Heart left ventricle (tissue), 16 donors: ENCODE measurements at regions of chr15 and their contacts with region 1.

Region 1: DNA sequence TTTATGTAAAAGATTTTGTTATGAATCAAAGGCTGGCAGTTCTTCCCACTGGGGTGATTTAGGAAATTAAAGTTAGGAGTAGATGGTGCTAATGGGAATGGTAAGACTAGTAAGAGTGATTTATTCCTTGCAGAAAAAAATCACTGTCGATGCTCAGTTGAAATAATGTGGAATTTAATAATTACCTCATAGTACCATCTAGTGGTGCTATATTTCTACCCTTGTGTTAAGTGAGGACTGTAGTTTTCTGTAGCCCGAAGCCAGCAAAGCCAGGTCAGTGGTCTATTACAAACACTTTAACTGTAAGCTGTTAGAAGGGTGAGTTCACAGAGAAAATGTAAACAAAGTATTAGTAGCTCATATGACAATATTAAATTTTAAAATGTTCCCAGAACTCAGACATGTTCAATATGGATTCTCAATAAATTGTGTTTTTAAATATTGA is 39.5 kb upstream of the GOLGA8J start:
- DNase-seq: no peak
- ATAC-seq: no peak
- H3K4me3 ChIP-seq: no peak overlapping the region
- H3K27ac ChIP-seq: no peak overlapping the region
- H3K4me1 ChIP-seq: peaks cover 0 to 8% (median 0%) of the 10 kb centered on the region in 12 donors
- H3K27me3 ChIP-seq: peaks cover 0 to 18% (median 2%) of the 10 kb centered on the region in 9 donors
- CTCF ChIP-seq: peak in 8 of 12 donors; percentile 18 to 47 (median 38)
- POLR2A ChIP-seq: no peak

Region 2: DNA sequence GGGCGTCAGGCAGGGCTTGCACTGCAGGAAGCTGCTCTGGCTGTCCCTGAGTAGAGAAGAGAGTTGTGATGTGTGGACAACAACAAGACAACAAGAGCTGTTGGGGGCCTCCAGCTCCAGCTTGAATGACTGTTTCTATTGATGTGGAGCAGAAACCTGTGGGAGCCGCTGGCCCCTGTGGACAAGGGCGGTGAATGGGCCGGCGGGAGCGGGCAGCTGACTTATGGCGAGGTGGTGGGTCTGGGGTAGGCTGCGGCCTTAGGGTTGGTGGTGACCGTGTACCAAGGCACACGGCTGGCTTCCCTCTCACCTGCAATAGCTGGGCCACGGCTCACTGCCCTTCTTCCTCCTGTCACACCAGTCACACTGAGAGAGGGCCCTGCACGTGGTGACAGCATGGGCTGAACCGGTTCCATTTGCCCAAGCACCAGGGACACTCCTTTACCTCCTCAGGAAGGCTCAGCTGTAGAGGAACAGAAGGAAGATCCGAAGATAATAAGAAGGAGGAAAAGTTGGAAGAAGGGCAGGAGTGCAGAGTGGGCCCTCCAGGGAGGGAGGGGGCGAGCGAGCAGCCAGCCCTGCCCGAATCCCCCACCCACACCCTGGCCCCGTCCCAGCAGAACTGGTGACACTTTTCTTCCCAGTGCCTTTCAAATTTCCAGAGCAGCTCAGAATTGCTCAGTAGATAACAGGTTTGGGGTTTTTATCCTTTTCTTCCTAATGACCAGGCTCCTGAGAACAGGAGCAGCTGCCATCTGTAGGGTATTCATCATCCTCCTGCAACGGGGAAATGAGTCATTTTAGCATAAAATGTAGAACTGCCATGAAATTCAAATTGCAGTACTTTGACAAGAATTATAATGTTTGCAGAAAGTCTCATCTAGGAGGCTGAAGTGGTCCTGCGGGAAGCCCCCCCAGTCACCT is 357.8 kb before region 1 on chr15:
- intact Hi-C with region 1: loop called in 1 of 10 experiments (anchors 10 kb)
- DNase-seq: no peak
- ATAC-seq: no peak
- H3K4me3 ChIP-seq: no peak overlapping the region
- H3K27ac ChIP-seq: no peak overlapping the region
- H3K4me1 ChIP-seq: no peaks in the 10 kb centered on the region
- H3K27me3 ChIP-seq: no peaks in the 10 kb centered on the region
- CTCF ChIP-seq: no peak
- POLR2A ChIP-seq: no peak

Region 3: DNA sequence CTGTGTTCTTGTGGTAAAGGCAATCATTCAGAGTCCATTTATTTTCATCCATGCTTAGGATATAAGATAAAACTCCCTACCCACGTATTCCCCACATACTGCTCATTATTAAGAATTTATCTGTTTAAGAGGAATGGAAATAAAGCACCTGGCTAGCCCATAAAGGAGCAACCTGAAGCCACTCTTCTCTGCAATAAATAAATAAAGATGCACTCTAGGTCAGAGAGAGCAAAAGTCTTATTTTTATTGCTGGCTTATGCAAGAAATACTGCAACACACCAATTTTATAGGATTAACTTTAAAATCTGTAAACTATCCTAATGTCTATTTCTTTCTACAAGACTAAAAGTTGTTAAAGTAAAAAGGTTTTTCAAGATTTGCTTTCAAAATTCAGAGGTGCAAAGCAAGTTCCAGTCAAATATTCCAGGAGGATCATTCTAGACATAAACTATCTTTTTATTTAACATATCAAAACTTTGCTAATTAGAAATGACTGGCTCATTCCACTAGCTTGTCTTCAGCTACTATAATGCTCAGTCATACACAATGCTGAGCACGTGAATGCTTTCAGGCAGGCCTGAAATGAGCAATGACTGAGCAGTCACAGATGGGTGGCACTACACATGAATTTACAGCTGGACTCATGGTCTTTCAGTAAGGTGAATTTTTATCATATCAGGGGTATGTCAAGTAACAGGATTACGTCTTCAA is 228.1 kb before region 1 on chr15:
- intact Hi-C with region 1: no loop called
- DNase-seq: no peak
- ATAC-seq: peak; percentile 62 to 88 (median 82)
- H3K4me3 ChIP-seq: no peak overlapping the region
- H3K27ac ChIP-seq: peak overlapping the region in 5 of 12 donors; percentile 2 to 44 (median 12)
- H3K4me1 ChIP-seq: peaks cover 6 to 88% (median 56%) of the 10 kb centered on the region in 12 donors
- H3K27me3 ChIP-seq: peaks cover 0 to 15% (median 0%) of the 10 kb centered on the region in 9 donors
- CTCF ChIP-seq: peak in 1 of 12 donors; percentile 16
- POLR2A ChIP-seq: no peak

Region 4: DNA sequence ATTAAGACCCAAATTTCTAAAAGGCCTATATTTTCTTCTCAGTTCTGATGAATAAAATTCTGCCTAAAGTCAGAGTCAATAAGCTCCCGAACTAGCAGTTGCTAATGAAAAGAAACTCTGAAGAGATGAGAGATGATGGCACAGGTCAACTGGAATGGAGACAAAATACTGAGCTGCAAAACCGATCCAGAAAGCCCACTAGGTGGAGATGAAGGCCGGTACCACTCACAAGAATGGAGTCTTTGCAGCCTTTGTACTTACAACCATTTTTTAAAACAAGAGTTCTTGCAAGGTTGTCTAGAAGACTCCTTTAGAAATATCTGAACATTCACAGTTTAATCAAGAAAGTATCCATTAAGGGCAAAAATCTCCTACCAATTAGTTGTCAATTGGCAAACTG is 101.1 kb before region 1 on chr15:
- intact Hi-C with region 1: loop called in 7 of 10 experiments (anchors 5 to 10 kb)
- DNase-seq: no peak
- ATAC-seq: peak in 2 of 4 donors; percentile 41 to 54
- H3K4me3 ChIP-seq: no peak overlapping the region
- H3K27ac ChIP-seq: no peak overlapping the region
- H3K4me1 ChIP-seq: peaks cover 0 to 4% (median 0%) of the 10 kb centered on the region in 12 donors
- H3K27me3 ChIP-seq: no peaks in the 10 kb centered on the region
- CTCF ChIP-seq: peak in 8 of 12 donors; percentile 16 to 42 (median 34)
- POLR2A ChIP-seq: no peak

Region 5: DNA sequence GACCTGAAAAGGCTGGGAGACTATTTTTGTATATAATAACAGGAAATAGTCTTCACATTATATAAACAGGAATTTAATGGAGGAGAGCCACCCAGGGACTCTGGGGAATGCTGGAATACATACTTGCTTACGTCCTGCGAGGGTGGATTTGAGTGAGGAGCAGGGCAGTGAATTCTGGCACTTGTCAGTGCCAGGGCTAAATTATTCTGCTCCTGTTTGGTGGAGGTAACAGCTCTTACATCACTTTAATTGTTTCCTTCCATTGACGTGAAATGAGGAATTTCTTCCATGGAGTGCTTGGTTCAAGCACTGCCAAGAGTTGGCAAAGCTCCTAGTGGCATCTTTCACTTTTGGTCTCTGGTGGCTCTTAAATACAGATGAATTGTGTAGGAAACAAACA is 54.5 kb before region 1 on chr15:
- intact Hi-C with region 1: loop called in 1 of 10 experiments (anchors 5 kb)
- DNase-seq: no peak
- ATAC-seq: peak in 3 of 4 donors; percentile 27 to 53 (median 52)
- H3K4me3 ChIP-seq: no peak overlapping the region
- H3K27ac ChIP-seq: no peak overlapping the region
- H3K4me1 ChIP-seq: peaks cover 0 to 12% (median 4%) of the 10 kb centered on the region in 12 donors
- H3K27me3 ChIP-seq: peaks cover 0 to 7% (median 0%) of the 10 kb centered on the region in 9 donors
- CTCF ChIP-seq: no peak
- POLR2A ChIP-seq: no peak